Mammary epithelial cell (primary cell): ENCODE measurements at regions of chr14 and their contacts with region 1.

Region 1: DNA sequence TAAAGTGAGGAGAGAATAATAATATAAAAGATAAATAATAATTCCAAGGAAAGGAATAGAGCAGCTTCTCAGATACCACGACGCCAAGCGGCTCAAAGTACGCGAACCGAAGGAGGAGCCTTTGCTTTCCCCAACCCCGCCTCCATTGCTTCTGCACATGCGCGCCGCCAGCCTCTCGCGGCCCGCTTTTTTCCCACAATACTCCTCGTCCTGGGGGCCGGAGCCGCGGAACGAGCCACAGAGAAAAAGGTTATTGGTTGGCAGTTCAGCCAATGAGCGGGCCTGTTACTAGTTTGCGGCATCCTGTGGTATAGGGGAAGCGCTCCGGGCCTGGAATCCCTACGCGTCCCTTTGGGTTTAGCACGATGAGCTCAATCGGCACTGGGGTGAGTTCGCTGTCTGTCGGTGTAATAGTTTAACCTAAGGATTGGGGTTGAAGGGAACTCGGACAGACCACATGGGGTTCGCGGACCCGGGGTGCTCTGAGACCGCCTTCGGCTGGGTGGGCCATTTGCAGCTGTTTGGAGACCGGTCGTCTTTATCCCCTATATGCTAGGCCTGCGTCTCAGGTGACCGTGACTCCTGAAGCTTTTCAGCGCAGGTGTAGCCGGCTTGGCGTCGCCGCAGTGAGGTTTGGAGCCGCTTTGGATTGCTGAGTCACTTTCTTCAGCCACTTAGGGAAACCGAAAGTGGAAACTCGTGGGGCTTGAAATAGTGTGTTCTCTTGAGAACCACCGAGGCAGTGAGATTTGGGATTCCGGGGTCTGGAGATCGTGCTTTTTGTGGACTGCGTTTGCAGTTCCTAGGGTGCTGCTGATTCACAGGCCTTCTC is at the start of gene PSMA3:
- DNase-seq: peak; percentile 98
- H3K4me3 ChIP-seq: peak within 1 kb of the TSS; percentile 81 to 100 (median 96)
- H3K27ac ChIP-seq: peak within 1 kb of the TSS; percentile 93
- H3K4me1 ChIP-seq: peaks cover 18% of the 10 kb centered on the region
- H3K27me3 ChIP-seq: no peaks in the 10 kb centered on the region
- CTCF ChIP-seq: peak in 1 of 2 donors; percentile 16
- total RNA-seq, gene PSMA3: 69.8 to 157 TPM

Region 2: DNA sequence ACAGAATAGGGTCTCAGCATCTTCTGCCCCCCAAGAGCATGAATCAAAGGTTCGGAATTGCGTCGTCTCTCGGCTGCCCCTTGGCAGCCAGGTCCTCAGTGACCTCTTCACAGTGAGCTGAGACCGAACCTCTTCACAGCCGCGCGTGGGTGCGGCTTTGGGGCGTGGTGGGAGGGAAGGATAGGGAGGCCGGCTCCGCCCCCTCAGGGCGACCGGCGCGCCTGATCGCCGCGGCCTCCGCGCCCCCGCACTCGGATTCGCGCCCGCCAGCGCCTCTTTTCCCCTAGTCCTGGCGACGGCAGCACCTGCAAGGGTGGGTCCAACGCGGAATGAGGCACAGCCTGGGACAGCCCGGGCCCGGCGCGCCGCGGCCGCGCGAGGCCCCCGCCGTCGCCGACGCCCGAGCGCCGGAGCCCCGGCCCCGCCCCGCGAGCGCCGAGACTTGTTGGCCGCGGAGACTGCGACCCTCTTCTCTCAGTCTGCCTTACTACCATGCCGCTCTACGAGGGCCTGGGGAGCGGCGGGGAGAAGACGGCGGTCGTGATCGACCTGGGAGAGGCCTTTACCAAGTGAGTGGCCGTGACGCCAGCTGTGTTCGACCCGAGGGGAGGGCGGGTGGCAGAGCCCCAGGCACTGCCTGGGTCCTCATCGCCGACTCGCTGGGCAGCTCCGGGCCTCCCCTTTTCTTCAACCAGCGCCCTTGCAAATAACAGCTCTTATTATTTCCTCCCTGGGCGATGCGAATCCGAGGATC is 44.9 kb before region 1 on chr14 and contains the start of gene ACTR10:
- CTCF ChIA-PET with region 1: no interaction called
- dilution Hi-C with region 1: no loop called
- in situ Hi-C with region 1: no loop called
- intact Hi-C with region 1: loop called (anchors 2 kb)
- DNase-seq: peak; percentile 85
- H3K4me3 ChIP-seq: peak within 1 kb of the TSS; percentile 85 to 97 (median 90)
- H3K27ac ChIP-seq: peak within 1 kb of the TSS; percentile 58
- H3K4me1 ChIP-seq: peaks cover 9% of the 10 kb centered on the region
- H3K27me3 ChIP-seq: no peaks in the 10 kb centered on the region
- CTCF ChIP-seq: no peak
- total RNA-seq, gene ACTR10: 62.5 to 67.9 TPM

Region 3: GRCh38 chr14:58341152-58341748 is 96.5 kb after region 1 on chr14:
- CTCF ChIA-PET with region 1: no interaction called
- dilution Hi-C with region 1: no loop called
- in situ Hi-C with region 1: no loop called
- intact Hi-C with region 1: no loop called
- DNase-seq: no peak
- H3K4me3 ChIP-seq: no peak overlapping the region
- H3K27ac ChIP-seq: no peak overlapping the region
- H3K4me1 ChIP-seq: no peaks in the 10 kb centered on the region
- H3K27me3 ChIP-seq: no peaks in the 10 kb centered on the region
- CTCF ChIP-seq: no peak